ENCODE measurements at regions of chr1 and their contacts with region 1.

Region 1: DNA sequence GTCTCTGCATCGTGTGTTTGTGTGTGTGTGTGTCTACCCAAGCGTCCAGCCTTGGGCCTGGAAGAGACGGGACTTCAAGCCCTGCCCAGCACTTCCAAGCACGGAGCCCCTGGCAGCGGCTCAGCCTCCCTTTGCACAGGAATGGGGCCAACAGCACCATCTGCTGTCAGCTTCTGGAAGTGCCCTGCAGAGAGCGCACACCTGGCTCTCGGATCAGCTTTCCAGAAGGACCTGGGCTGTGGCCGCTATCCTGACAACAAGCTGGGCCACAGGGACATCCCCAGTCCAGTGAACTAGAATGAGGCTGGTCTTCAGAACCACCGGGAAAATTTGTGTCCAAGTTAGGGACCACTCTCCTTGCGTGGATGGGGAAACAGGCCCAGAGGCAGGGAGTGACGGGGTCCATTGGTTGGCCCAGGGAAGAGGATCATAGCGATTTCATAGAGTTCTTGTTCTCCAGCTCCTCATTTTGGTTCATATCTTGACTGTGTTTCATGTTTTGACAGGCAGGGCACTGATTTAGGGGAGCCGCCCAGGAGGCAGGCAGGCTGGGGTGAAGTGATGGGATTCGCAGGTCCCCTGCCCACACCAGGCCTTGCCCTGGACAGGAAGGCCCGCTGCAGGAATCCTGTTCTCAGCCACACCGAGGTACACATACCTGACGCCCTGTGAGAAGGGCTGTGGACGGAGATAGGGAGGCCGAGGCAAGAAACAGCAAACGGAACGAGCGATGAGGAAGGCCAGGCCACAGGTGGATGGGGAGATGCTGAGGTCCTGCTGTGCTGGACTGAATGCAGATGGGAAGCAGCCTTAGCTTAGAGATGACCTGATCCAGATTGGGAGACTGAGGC is 38.4 kb downstream of the TAS1R2 start:
- DNase-seq: peak; percentile 37
- ATAC-seq: peak; percentile 96
- H3K4me3 ChIP-seq: no peak overlapping the region
- H3K27ac ChIP-seq: no peak overlapping the region
- H3K4me1 ChIP-seq: peaks cover 0 to 4% of the 10 kb centered on the region in 2 experiments; a peak in 1 of 4 replicates
- H3K27me3 ChIP-seq: no peaks in the 10 kb centered on the region
- CTCF ChIP-seq: peak; percentile 72 to 97 (median 91)
- POLR2A ChIP-seq: no peak
- RAD21 ChIP-seq: peak; percentile 88

Region 2: GRCh38 chr1:18608534-18608933 is 212.5 kb before region 1 on chr1:
- CTCF ChIA-PET with region 1: interaction called, 10 read pairs
- POLR2A ChIA-PET with region 1: no interaction called
- RAD21 ChIA-PET with region 1: no interaction called
- intact Hi-C with region 1: no loop called
- DNase-seq: no peak
- ATAC-seq: peak; percentile 78
- H3K4me3 ChIP-seq: no peak overlapping the region
- H3K27ac ChIP-seq: no peak overlapping the region
- H3K4me1 ChIP-seq: no peaks in the 10 kb centered on the region
- H3K27me3 ChIP-seq: no peaks in the 10 kb centered on the region
- CTCF ChIP-seq: peak; percentile 58 to 76 (median 62)
- POLR2A ChIP-seq: no peak
- RAD21 ChIP-seq: peak; percentile 74

Region 3: GRCh38 chr1:18855573-18855972 is 34.6 kb after region 1 on chr1:
- CTCF ChIA-PET with region 1: no interaction called
- POLR2A ChIA-PET with region 1: no interaction called
- RAD21 ChIA-PET with region 1: no interaction called
- intact Hi-C with region 1: no loop called
- DNase-seq: no peak
- ATAC-seq: no peak
- H3K4me3 ChIP-seq: no peak overlapping the region
- H3K27ac ChIP-seq: no peak overlapping the region
- H3K4me1 ChIP-seq: no peaks in the 10 kb centered on the region
- H3K27me3 ChIP-seq: peaks cover 16% of the 10 kb centered on the region
- CTCF ChIP-seq: no peak
- POLR2A ChIP-seq: no peak
- RAD21 ChIP-seq: no peak

Region 4: GRCh38 chr1:18875107-18875795 is 54.2 kb after region 1 on chr1:
- CTCF ChIA-PET with region 1: interaction called, 3 read pairs
- POLR2A ChIA-PET with region 1: no interaction called
- RAD21 ChIA-PET with region 1: no interaction called
- intact Hi-C with region 1: loop called (anchors 2 kb)
- DNase-seq: peak; percentile 81
- ATAC-seq: peak; percentile 97
- H3K4me3 ChIP-seq: no peak overlapping the region
- H3K27ac ChIP-seq: no peak overlapping the region
- H3K4me1 ChIP-seq: peaks cover 0 to 6% of the 10 kb centered on the region in 2 experiments; a peak in 1 of 4 replicates
- H3K27me3 ChIP-seq: no peaks in the 10 kb centered on the region
- CTCF ChIP-seq: peak; percentile 91 to 94 (median 92)
- POLR2A ChIP-seq: no peak
- RAD21 ChIP-seq: peak; percentile 89

Region 5: GRCh38 chr1:18956369-18957135 is 135.5 kb after region 1 on chr1 and contains the start of gene IFFO2:
- CTCF ChIA-PET with region 1: no interaction called
- POLR2A ChIA-PET with region 1: no interaction called
- RAD21 ChIA-PET with region 1: no interaction called
- intact Hi-C with region 1: no loop called
- DNase-seq: peak; percentile 76
- ATAC-seq: peak; percentile 91
- H3K4me3 ChIP-seq: peak within 1 kb of the TSS; percentile 63 to 75
- H3K27ac ChIP-seq: peak within 1 kb of the TSS; percentile 70; the same call in 1 of the 2 replicates
- H3K4me1 ChIP-seq: peaks cover 3 to 22% of the 10 kb centered on the region in 2 experiments; a peak in 3 of 4 replicates
- H3K27me3 ChIP-seq: no peaks in the 10 kb centered on the region
- CTCF ChIP-seq: no peak
- POLR2A ChIP-seq: peak; percentile 72
- RAD21 ChIP-seq: no peak
- total RNA-seq, gene IFFO2: 15.6 TPM